ENCODE measurements at regions of chr7 and their contacts with region 1.

Region 1: DNA sequence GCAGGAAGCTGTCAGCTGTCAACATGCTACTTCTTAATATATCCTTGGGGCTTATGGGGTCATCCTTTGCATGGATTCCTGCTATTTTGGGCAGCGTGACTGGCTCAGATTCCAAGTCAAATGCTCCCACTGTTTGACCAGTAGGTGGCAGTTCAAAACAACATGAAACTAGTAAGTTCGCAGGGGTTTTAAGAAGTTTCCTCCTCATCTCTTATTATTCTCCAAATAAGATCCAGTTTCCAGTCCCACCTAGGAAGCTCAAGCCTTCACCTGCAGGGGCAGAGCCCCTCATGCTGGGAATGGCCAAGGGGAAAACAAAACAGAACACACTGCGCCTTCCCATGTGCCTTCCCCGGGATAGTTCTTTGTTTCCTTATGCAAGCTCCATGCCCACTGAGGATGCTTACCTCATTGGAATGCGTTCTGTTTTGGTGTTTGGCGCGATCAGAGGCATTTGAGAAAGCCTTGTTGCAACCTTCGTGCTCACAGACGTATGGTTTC is 259.8 kb downstream of the GLI3 start:
- DNase-seq: no peak
- H3K4me3 ChIP-seq: no peak overlapping the region
- H3K27ac ChIP-seq: peak overlapping the region in 3 of 4 donors; percentile 58 to 70 (median 65)
- H3K4me1 ChIP-seq: peaks cover 0 to 56% (median 52%) of the 10 kb centered on the region in 4 donors
- H3K27me3 ChIP-seq: no peaks in the 10 kb centered on the region
- CTCF ChIP-seq: peak; percentile 55 to 79 (median 62)
- EP300 ChIP-seq: no peak
- POLR2A ChIP-seq: no peak

Region 2: GRCh38 chr7:42348631-42349030 is 371.4 kb after region 1 on chr7:
- intact Hi-C with region 1: loop called (anchors 10 kb)
- DNase-seq: no peak
- H3K4me3 ChIP-seq: no peak overlapping the region
- H3K27ac ChIP-seq: peak overlapping the region in 2 of 4 donors; percentile 19 to 52
- H3K4me1 ChIP-seq: peaks cover 0 to 41% (median 25%) of the 10 kb centered on the region in 4 donors
- H3K27me3 ChIP-seq: no peaks in the 10 kb centered on the region
- CTCF ChIP-seq: no peak
- EP300 ChIP-seq: no peak
- POLR2A ChIP-seq: no peak

Region 3: GRCh38 chr7:42493436-42494238 is 516.4 kb after region 1 on chr7:
- intact Hi-C with region 1: loop called (anchors 5 kb)
- DNase-seq: peak; percentile 94
- H3K4me3 ChIP-seq: peak overlapping the region; percentile 41 to 59 (median 54)
- H3K27ac ChIP-seq: peak overlapping the region; percentile 69 to 92 (median 88)
- H3K4me1 ChIP-seq: peaks cover 0 to 63% (median 46%) of the 10 kb centered on the region in 4 donors
- H3K27me3 ChIP-seq: no peaks in the 10 kb centered on the region
- CTCF ChIP-seq: no peak
- EP300 ChIP-seq: peak in 3 of 4 donors; percentile 51 to 86 (median 83)
- POLR2A ChIP-seq: no peak

Region 4: GRCh38 chr7:42831718-42832431 is 854.7 kb after region 1 on chr7:
- intact Hi-C with region 1: loop called (anchors 2 kb)
- DNase-seq: peak; percentile 80
- H3K4me3 ChIP-seq: no peak overlapping the region
- H3K27ac ChIP-seq: peak overlapping the region in 3 of 4 donors; percentile 40 to 69 (median 65)
- H3K4me1 ChIP-seq: peaks cover 0 to 26% (median 20%) of the 10 kb centered on the region in 4 donors
- H3K27me3 ChIP-seq: no peaks in the 10 kb centered on the region
- CTCF ChIP-seq: peak; percentile 55 to 76 (median 72)
- EP300 ChIP-seq: no peak
- POLR2A ChIP-seq: no peak

Measured in sigmoid colon (tissue), 7 donors.